ENCODE measurements at regions of chr15 and their contacts with region 1.

Region 1: GRCh38 chr15:33086507-33087121 is 107.9 kb downstream of the FMN1 start:
- DNase-seq: peak; percentile 84
- ATAC-seq: peak; percentile 83
- H3K4me3 ChIP-seq: no peak overlapping the region
- H3K27ac ChIP-seq: 0 out of 2 replicates have a peak overlapping the region, but pooled peaks have one; percentile 14
- H3K4me1 ChIP-seq: peaks cover 49% of the 10 kb centered on the region
- H3K27me3 ChIP-seq: no peaks in the 10 kb centered on the region
- CTCF ChIP-seq: peak; percentile 84

Region 2: DNA sequence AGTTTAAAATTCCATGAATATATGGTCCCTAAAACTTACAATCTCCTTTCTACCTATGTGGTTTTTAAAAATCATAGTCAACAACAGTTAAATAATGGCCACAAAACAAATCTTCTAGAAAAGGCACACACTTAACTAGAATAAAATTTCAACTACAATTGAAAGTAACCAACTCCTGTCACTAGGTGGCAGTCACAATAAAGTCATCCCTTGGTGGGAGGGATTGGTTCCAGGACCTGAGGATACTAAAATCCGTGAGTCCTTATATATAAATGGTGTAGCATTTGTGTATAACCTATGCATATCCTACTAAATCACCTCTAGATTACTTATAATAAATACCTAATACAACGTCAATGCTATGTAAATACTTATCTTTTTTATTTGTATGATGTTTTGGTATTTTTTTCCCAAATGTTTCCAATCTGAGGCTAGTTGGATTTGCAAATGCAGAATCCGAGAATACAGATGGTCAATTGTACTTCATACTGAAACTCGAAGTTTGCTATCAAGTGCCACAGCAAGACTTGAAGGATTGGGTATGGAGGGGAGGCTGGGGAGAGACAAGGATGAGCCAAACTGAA is 64.7 kb before region 1 on chr15:
- CTCF ChIA-PET with region 1: interaction called, 10 read pairs
- POLR2A ChIA-PET with region 1: no interaction called
- intact Hi-C with region 1: loop called (anchors 1 kb)
- DNase-seq: peak; percentile 85
- ATAC-seq: peak; percentile 64
- H3K4me3 ChIP-seq: no peak overlapping the region
- H3K27ac ChIP-seq: peak overlapping the region; percentile 33
- H3K4me1 ChIP-seq: peaks cover 13% of the 10 kb centered on the region
- H3K27me3 ChIP-seq: no peaks in the 10 kb centered on the region
- CTCF ChIP-seq: peak; percentile 89

Region 3: GRCh38 chr15:33055962-33056361 is 30.7 kb before region 1 on chr15:
- CTCF ChIA-PET with region 1: no interaction called
- POLR2A ChIA-PET with region 1: no interaction called
- intact Hi-C with region 1: no loop called
- DNase-seq: no peak
- ATAC-seq: no peak
- H3K4me3 ChIP-seq: no peak overlapping the region
- H3K27ac ChIP-seq: no peak overlapping the region
- H3K4me1 ChIP-seq: no peaks in the 10 kb centered on the region
- H3K27me3 ChIP-seq: no peaks in the 10 kb centered on the region
- CTCF ChIP-seq: no peak

Region 4: GRCh38 chr15:33067941-33068481 is 18.6 kb before region 1 on chr15:
- CTCF ChIA-PET with region 1: interaction called, 7 read pairs
- POLR2A ChIA-PET with region 1: interaction called, 18 read pairs
- intact Hi-C with region 1: no loop called
- DNase-seq: peak; percentile 71
- ATAC-seq: peak; percentile 68
- H3K4me3 ChIP-seq: peak overlapping the region; percentile 43
- H3K27ac ChIP-seq: peak overlapping the region; percentile 95
- H3K4me1 ChIP-seq: peaks cover 48% of the 10 kb centered on the region
- H3K27me3 ChIP-seq: no peaks in the 10 kb centered on the region
- CTCF ChIP-seq: no peak

Region 5: DNA sequence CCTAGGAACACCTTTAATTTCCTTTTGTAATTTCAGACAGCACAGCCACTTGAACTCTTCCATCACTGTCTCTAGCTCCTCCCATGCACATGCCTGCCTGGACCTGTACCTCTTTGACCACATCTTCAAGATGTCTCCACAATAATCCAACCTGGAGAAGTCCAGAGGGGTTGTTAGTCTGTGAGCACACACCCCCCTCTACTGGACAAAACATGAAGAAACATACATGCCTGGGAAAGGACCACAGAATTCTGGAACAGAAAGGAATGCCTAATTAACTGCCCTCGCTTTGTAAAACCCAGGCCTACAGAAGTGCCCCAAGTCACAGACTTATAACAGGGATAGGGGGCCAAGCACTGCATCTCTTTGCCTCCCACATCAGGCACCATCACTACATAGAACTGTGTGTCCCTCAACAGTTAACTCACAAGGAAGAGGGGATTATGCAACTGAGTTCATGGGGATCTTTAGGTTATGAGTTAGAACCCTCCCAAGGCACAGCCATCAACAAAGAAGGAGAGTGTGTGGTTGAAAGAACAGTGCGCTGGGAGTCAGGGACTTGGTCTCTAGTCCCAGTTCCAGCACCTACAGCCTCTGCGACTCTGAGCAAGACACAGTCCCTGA is 46.2 kb after region 1 on chr15:
- CTCF ChIA-PET with region 1: interaction called, 38 read pairs
- POLR2A ChIA-PET with region 1: no interaction called
- intact Hi-C with region 1: loop called (anchors 1 kb)
- DNase-seq: peak; percentile 85
- ATAC-seq: peak; percentile 96
- H3K4me3 ChIP-seq: no peak overlapping the region
- H3K27ac ChIP-seq: no peak overlapping the region
- H3K4me1 ChIP-seq: peaks cover 16% of the 10 kb centered on the region
- H3K27me3 ChIP-seq: no peaks in the 10 kb centered on the region
- CTCF ChIP-seq: peak; percentile 91

Region 6: DNA sequence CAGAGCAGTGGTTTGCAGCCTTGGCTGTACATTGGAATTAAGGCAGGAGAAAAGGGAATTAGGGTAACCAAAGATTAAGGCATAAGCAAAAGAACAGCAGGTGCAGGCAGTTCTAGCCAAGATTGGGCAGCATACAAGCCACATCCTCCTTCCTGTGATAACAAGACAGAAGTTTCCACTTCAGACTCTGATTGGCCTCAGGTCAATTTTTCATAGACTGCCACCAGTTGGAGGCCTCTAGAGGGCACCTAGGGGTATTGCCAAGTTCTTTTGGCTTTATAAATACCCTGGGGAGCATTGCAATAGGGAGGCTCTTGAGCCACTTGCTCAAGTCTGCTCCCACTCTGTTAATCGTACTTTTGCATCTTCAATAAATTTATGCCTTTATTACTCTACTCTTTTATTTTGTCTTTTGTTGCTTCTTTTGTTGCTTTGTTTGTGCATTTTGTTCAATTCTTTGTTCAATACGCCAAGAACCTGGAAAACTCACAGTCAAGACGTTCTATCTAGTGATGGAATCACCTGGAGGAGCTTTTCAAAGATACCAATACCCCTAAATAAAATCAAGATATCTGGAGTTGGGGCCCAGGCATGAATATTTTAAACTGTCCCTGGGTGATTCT is 140.1 kb after region 1 on chr15:
- CTCF ChIA-PET with region 1: no interaction called
- POLR2A ChIA-PET with region 1: no interaction called
- intact Hi-C with region 1: loop called (anchors 1 kb)
- DNase-seq: peak; percentile 81
- ATAC-seq: peak; percentile 78
- H3K4me3 ChIP-seq: no peak overlapping the region
- H3K27ac ChIP-seq: no peak overlapping the region
- H3K4me1 ChIP-seq: no peaks in the 10 kb centered on the region
- H3K27me3 ChIP-seq: 0 out of 2 replicates have a peak, but pooled peaks cover 6% of the 10 kb centered on the region
- CTCF ChIP-seq: peak; percentile 69

Region 7: DNA sequence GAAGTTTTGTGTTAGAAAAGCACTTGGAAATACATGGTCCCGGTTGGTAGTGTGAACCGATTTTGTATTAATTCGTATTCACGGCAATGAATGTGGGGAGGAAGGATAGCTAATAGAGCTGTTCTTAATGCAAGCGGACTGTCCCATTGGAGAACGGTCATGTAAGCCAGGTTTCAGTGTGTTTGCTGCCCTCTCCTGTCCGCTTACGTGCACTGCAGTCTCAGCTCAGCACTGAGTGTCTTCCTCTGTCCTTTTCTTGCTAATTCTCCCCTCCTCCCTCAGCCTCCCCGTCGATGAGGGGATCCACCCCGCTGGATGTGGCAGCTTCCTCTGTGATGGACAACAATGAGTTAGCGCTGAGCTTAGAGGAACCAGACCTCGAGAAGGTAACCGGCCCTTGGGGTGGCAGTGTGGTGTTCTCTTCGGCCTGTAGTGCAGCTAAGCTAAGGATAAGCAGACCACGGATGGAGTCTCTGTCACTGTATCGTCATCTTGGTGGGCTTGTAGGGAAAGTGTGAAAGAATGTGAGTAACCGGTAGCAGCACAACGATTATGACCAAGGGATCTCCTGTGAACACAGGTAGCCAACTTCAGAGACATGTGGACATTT is 614.2 kb after region 1 on chr15:
- CTCF ChIA-PET with region 1: no interaction called
- POLR2A ChIA-PET with region 1: no interaction called
- intact Hi-C with region 1: loop called (anchors 5 kb)
- DNase-seq: peak; percentile 84
- ATAC-seq: peak; percentile 97
- H3K4me3 ChIP-seq: no peak overlapping the region
- H3K27ac ChIP-seq: no peak overlapping the region
- H3K4me1 ChIP-seq: no peaks in the 10 kb centered on the region
- H3K27me3 ChIP-seq: peaks cover 30% of the 10 kb centered on the region
- CTCF ChIP-seq: peak; percentile 90